ENCODE measurements at regions of chr20 and their contacts with region 1.

Region 1: DNA sequence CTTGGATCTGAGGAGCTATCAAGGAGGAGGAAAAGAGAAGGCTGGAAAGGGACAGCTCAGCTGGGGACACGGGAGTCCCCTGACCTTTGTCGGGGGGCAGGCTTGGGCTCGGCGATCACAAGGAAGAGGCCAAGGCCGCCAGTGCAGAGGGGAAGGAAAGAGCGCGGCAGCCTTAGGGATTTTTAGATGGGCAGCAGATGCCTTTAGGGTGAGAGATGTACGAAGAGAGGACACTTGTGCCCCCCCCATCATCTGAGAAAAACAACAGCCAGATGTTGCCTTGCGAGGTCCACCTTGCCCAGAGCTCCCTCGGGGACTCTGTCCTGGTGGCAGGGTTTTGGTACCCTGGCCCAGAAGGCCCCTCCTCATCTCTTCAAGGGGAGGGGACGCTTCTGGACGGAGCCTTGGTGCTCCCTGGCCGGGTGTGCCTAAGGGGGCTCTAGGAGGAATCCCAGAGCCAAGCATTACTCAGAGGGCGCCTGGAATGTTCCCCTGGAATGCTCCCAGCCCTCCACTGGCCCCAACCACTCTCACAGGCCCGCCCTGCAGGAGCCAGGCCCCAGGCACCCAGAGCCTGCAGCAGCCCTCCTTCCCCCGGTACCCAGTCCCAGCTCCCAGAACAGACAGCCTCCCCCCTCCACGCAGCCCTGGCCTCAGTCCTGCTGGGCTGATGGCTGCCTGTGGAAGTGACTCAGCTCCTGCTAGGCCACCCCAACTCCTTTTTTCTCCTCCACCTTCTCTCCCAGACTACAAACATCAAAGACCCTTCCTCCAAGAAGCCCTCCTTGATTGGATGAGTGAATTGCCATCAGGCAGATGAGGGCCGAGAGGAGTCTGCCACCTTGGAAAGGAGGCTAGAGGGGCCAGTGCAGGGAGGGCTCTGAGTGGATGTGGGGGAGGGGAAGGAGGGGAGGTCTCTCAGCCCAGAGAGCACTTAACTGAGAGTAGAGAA is 1.8 kb downstream of the ADAM33 start:
- DNase-seq: peak; percentile 57
- H3K4me3 ChIP-seq: peak overlapping the region; percentile 70
- CTCF ChIP-seq: no peak

Region 2: DNA sequence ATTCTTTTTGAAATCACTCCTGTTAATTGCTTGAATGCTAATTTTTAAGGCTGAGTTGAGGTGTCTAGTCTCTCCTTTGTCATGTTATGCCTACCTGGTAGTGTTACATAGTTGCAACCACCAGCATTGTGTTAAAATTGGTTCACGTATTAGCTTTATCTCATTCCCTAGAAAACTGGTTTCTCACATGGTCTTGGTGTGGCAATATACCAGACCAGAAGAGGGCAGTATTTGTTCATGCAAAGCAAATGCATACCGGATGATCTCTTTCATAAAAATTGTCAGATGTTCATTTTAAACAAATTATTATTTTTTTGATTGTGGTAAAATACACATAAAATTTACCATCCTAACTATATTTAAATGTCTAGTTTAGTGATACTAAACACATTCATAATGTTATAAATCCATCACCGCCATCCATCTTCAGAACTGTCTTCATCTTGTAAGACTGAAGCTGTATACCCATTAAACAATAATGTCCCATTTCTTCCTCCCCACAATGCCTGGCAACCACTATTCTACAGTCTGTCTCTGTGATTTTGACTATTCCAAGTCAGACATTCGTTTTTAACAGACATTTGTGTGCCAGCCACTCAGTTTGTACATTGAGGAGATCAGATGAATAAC is 116.4 kb before region 1 on chr20:
- CTCF ChIA-PET with region 1: interaction called, 26 read pairs
- POLR2A ChIA-PET with region 1: no interaction called
- DNase-seq: peak; percentile 10
- H3K4me3 ChIP-seq: no peak overlapping the region
- CTCF ChIP-seq: peak; percentile 62

Region 3: DNA sequence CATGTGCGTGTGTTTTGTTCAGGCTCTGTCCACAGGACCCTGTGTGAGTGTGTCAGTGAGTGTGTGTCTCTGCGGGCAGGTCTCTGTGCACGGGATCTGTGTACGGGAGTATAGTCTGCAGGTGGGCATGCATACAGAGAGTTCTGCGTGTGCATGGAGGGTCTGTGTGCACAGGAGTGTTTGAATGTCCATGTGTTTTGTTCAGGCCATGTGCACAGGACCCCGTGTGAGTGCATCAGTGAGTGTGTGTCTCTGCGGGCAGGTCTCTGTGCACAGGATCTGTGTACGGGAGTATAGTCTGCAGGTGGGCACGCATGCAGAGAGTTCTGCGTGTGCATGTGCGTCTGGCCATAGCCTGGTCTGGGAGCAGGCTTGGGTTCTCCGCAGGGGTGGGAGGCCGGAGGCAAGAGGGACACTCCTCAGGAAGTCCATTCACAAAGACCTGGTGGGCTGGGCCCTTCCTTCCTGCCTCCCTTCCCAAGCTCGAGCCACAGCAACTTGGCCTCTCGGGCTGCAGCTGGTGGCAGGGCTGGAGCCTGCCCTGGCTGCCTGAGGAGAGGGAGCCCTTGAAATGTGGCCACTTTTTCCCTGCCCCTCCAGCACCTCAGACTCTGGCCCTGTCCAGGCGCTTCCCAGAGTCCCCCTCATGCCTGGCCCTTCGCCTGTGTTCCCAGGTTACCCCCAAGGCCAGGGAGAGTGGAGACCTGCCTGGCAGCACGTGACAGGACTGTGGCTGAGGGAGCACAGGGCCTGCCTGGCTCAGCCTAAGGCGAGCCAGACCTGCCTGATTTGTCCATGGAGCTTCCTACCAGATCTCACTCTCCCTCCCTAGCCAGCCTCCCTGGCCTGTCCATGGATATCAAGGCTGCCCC is 59.3 kb after region 1 on chr20:
- CTCF ChIA-PET with region 1: interaction called, 17 read pairs
- POLR2A ChIA-PET with region 1: no interaction called
- DNase-seq: no peak
- H3K4me3 ChIP-seq: no peak overlapping the region
- CTCF ChIP-seq: no peak

Region 4: GRCh38 chr20:3753098-3753980 is 73.3 kb after region 1 on chr20:
- CTCF ChIA-PET with region 1: interaction called, 74 read pairs
- POLR2A ChIA-PET with region 1: interaction called, 3 read pairs
- DNase-seq: peak; percentile 16
- H3K4me3 ChIP-seq: no peak overlapping the region
- CTCF ChIP-seq: peak; percentile 83

Region 5: GRCh38 chr20:3781153-3781910 is 101.3 kb after region 1 on chr20 and contains the start of gene SPEF1:
- CTCF ChIA-PET with region 1: interaction called, 68 read pairs
- POLR2A ChIA-PET with region 1: interaction called, 5 read pairs
- DNase-seq: peak; percentile 59
- H3K4me3 ChIP-seq: peak within 1 kb of the TSS; percentile 60
- CTCF ChIP-seq: peak; percentile 68

Measured in AG04449 (cell line).